ENCODE measurements at regions of chr2 and their contacts with region 1.

Region 1: DNA sequence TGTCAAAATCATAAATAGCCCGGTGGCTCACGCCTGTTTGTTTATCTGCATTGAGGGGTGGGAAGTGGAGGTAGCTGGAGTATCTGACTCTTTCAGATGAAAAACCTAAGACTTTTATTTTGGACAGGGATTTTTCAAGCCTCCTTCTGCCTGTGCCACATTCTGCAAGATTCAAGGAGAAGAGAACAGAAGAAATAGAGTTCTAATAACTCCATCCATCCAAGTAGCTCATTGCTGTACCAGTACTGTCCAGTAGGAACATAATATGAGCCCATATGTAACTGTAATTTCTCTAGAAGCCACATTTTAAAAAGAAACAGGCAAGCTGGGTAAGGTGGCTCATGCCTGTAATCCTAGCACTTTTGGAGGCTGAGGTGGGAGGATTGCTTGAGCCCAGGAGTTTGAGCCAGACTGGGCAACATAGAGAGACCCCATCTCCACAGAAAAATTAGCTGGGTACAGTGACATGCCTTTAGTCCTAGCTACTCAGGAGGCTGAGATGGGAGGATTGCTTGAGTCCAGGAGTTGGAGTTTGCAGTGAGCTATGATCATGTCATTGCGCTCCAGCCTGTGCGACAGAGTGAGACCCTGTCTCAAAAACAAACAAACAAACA is 35.4 kb upstream of the NT5DC4 start:
- DNase-seq: no peak
- ATAC-seq: no peak
- H3K4me3 ChIP-seq: no peak overlapping the region
- H3K27ac ChIP-seq: no peak overlapping the region
- H3K4me1 ChIP-seq: peaks cover 0 to 3% (median 0%) of the 10 kb centered on the region in 4 donors
- H3K27me3 ChIP-seq: no peaks in the 10 kb centered on the region
- CTCF ChIP-seq: no peak
- POLR2A ChIP-seq: no peak

Region 2: GRCh38 chr2:112433932-112434730 is 251.2 kb before region 1 on chr2:
- intact Hi-C with region 1: no loop called
- DNase-seq: peak in 1 of 3 donors; percentile 49
- ATAC-seq: no peak
- H3K4me3 ChIP-seq: no peak overlapping the region
- H3K27ac ChIP-seq: no peak overlapping the region
- H3K4me1 ChIP-seq: no peaks in the 10 kb centered on the region
- H3K27me3 ChIP-seq: no peaks in the 10 kb centered on the region
- CTCF ChIP-seq: no peak
- POLR2A ChIP-seq: no peak

Region 3: DNA sequence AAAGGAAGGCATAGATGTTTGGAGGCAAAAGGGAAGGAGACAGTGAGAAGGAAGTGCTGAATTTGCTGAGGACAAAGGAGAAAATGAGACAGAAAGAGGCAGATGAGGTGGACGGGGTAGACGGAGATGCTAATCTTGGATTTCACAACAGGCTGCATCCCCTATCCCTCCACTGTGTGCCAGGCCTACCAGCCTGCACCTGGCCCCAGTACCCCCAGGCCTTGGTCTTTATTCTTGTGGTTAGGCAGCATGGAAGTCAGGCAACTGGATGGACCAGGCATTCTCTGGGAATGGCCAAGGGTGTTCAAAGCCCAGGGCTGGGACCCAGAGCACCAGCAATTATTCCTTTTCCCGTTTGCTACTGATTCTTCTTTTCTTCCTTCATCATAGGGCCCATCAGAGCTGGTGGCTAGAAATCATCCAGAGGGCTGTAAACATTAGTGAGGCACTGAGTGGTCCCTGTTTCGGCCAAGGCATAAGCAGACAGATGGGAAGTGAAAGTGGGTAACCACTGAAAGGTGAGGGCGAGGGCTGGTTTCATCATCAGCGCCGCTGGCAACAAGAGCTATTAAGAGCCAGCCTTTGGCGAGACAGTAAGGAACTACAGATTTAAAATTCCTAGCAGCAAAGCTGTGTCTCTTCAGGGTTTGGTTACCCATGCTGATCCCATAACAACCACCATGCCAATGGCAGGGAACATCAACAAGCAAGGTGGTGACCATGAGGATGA is 49.0 kb before region 1 on chr2:
- intact Hi-C with region 1: loop called in 1 of 2 experiments (anchors 5 kb)
- DNase-seq: peak in 1 of 3 donors; percentile 23
- ATAC-seq: peak in 1 of 4 donors; percentile 18
- H3K4me3 ChIP-seq: no peak overlapping the region
- H3K27ac ChIP-seq: peak overlapping the region in 1 of 3 donors; percentile 32
- H3K4me1 ChIP-seq: peaks cover 0 to 10% (median 0%) of the 10 kb centered on the region in 4 donors
- H3K27me3 ChIP-seq: no peaks in the 10 kb centered on the region
- CTCF ChIP-seq: no peak
- POLR2A ChIP-seq: no peak